ENCODE measurements at regions of chr7 and their contacts with region 1.

Region 1: DNA sequence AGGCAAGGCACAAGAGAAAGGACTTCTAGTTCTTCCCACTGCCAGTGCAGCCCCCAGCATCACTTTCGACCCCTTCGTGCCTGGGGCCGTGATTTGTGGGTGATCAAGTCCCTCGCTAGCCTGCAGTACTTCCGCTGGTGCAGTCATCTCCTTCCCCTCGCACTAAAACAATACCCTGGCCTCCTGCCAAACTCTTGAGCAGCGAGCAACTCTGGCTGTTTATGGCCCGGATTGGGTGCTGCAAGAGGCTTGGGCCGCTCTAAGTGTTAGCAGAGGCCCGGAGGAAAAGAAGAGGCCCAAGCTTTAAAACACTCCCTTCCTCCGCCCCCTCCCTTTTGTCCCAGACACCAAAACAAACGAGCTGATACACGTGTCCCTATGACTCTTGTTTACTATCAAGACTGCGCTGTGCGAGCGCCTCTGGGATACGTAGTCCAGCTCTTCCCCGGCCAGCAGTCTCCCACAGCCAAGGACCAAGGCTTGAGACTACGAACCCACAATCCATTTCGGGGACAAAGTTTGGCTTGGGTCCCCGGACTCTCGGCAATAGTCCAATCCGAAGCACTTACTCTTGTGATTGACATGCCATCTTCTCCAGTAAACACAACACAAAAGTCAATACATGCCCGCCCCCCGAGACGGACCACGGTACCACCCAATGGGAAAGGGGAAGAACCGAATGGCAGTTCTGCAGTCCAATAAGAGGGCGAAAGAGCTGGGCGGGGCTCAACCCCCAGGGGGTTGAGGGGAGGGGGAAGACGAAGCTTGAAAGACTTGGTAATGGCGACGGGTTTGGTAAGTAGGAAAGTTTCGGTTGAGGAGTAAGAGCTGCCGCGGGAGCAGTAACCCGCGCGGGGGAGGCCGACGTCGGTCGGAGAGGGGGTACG is at the start of gene HBP1:
- DNase-seq: peak; percentile 100
- ATAC-seq: peak; percentile 90
- H3K4me3 ChIP-seq: peak within 1 kb of the TSS; percentile 67
- H3K27ac ChIP-seq: peak within 1 kb of the TSS; percentile 88
- H3K4me1 ChIP-seq: no peaks in the 10 kb centered on the region
- H3K27me3 ChIP-seq: no peaks in the 10 kb centered on the region
- CTCF ChIP-seq: no peak
- POLR2A ChIP-seq: peak; percentile 79
- RAD21 ChIP-seq: no peak
- total RNA-seq, gene HBP1: 69.9 and 70.0 TPM in 2 replicates

Region 2: GRCh38 chr7:106793015-106793975 is 375.2 kb before region 1 on chr7:
- CTCF ChIA-PET with region 1: no interaction called
- POLR2A ChIA-PET with region 1: no interaction called
- dilution Hi-C with region 1: no loop called
- in situ Hi-C with region 1: no loop called
- intact Hi-C with region 1: loop called (anchors 5 kb)
- DNase-seq: peak; percentile 33
- ATAC-seq: peak; percentile 59
- H3K4me3 ChIP-seq: no peak overlapping the region
- H3K27ac ChIP-seq: no peak overlapping the region
- H3K4me1 ChIP-seq: peaks cover 9% of the 10 kb centered on the region; the same call in 1 of the 2 replicates
- H3K27me3 ChIP-seq: no peaks in the 10 kb centered on the region
- CTCF ChIP-seq: peak; percentile 57
- POLR2A ChIP-seq: no peak
- RAD21 ChIP-seq: peak; percentile 72

Region 3: DNA sequence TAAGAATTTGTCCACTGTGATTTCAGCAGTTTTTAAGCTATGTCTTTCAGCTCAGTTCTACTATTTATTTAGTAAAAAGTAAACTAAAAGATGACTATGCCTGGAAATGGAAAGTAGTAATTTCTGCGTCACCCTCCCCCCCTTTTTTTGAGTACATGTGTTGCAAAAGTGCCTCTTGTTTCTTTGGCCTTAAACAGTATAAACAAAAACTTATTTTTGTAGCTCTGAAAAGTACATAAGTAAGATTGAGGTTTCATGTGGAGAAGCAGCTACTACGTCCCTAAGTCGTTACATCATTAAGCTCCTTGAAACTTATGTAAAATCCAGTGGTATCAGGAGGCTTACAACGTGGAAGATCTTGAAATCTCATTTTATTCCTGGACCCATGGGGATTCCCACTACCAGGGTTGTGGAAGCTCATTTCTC is 46.0 kb before region 1 on chr7:
- CTCF ChIA-PET with region 1: interaction called, 3 read pairs
- POLR2A ChIA-PET with region 1: no interaction called
- dilution Hi-C with region 1: no loop called
- in situ Hi-C with region 1: no loop called
- intact Hi-C with region 1: loop called (anchors 1 kb)
- DNase-seq: peak; percentile 85
- ATAC-seq: peak; percentile 86
- H3K4me3 ChIP-seq: no peak overlapping the region
- H3K27ac ChIP-seq: no peak overlapping the region
- H3K4me1 ChIP-seq: peaks cover 11% of the 10 kb centered on the region
- H3K27me3 ChIP-seq: no peaks in the 10 kb centered on the region
- CTCF ChIP-seq: no peak
- POLR2A ChIP-seq: no peak
- RAD21 ChIP-seq: no peak

Region 4: GRCh38 chr7:107187774-107188173 is 19.3 kb after region 1 on chr7:
- CTCF ChIA-PET with region 1: no interaction called
- POLR2A ChIA-PET with region 1: no interaction called
- dilution Hi-C with region 1: no loop called
- in situ Hi-C with region 1: no loop called
- intact Hi-C with region 1: no loop called
- DNase-seq: no peak
- ATAC-seq: no peak
- H3K4me3 ChIP-seq: no peak overlapping the region
- H3K27ac ChIP-seq: no peak overlapping the region
- H3K4me1 ChIP-seq: peaks cover 9% of the 10 kb centered on the region
- H3K27me3 ChIP-seq: no peaks in the 10 kb centered on the region
- CTCF ChIP-seq: no peak
- POLR2A ChIP-seq: no peak
- RAD21 ChIP-seq: no peak

Measured in IMR-90 (cell line).